PC-9 (cell line): ENCODE measurements at regions of chr2 and their contacts with region 1.

Region 1: GRCh38 chr2:113756355-113757137 is at the start of gene SLC35F5:
- DNase-seq: peak; percentile 74 to 93
- H3K4me3 ChIP-seq: peak within 1 kb of the TSS; percentile 89
- H3K27ac ChIP-seq: peak within 1 kb of the TSS; percentile 74
- H3K4me1 ChIP-seq: peaks cover 19% of the 10 kb centered on the region
- H3K27me3 ChIP-seq: no peaks in the 10 kb centered on the region
- CTCF ChIP-seq: no peak
- total RNA-seq, gene SLC35F5: 41.6 and 43.5 TPM in 2 replicates

Region 2: GRCh38 chr2:113799375-113799774 is 42.8 kb after region 1 on chr2:
- CTCF ChIA-PET with region 1: no interaction called
- POLR2A ChIA-PET with region 1: interaction called, 4 read pairs
- intact Hi-C with region 1: loop called (anchors 5 kb)
- DNase-seq: no peak
- H3K4me3 ChIP-seq: no peak overlapping the region
- H3K27ac ChIP-seq: no peak overlapping the region
- H3K4me1 ChIP-seq: no peaks in the 10 kb centered on the region
- H3K27me3 ChIP-seq: no peaks in the 10 kb centered on the region
- CTCF ChIP-seq: 0 out of 2 replicates have a peak, but pooled peaks have one; percentile 15

Region 3: GRCh38 chr2:113818382-113818951 is 61.9 kb after region 1 on chr2:
- CTCF ChIA-PET with region 1: no interaction called
- POLR2A ChIA-PET with region 1: no interaction called
- intact Hi-C with region 1: loop called (anchors 1 kb)
- DNase-seq: peak; percentile 76 to 88
- H3K4me3 ChIP-seq: peak overlapping the region; percentile 42; the same call in 1 of the 2 replicates
- H3K27ac ChIP-seq: peak overlapping the region; percentile 52
- H3K4me1 ChIP-seq: peaks cover 19% of the 10 kb centered on the region
- H3K27me3 ChIP-seq: no peaks in the 10 kb centered on the region
- CTCF ChIP-seq: no peak

Region 4: GRCh38 chr2:113831161-113831560 is 74.6 kb after region 1 on chr2:
- CTCF ChIA-PET with region 1: no interaction called
- POLR2A ChIA-PET with region 1: interaction called, 3 read pairs
- intact Hi-C with region 1: loop called (anchors 1 kb)
- DNase-seq: peak; percentile 71 to 93
- H3K4me3 ChIP-seq: no peak overlapping the region
- H3K27ac ChIP-seq: peak overlapping the region; percentile 80
- H3K4me1 ChIP-seq: peaks cover 10% of the 10 kb centered on the region
- H3K27me3 ChIP-seq: no peaks in the 10 kb centered on the region
- CTCF ChIP-seq: no peak

Region 5: DNA sequence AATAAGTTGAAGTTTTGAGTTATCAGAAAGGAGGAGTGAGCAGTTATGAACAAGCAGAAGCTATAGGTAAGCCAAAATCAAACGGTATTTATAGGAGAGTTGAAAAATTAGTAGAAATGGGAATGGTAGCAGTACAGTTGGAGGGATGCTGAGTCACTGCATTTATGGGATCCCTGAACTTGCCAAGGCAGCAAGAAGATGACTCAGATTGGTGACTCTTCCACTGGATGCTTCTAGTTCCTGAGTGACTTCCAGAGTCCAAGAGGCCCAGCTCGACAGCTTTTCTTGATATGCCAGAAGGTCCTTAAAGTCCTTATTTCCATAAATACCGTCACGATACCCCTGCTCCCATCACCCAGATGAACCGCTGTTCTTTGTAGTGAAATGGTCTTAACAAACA is 102.2 kb after region 1 on chr2:
- CTCF ChIA-PET with region 1: no interaction called
- POLR2A ChIA-PET with region 1: no interaction called
- intact Hi-C with region 1: no loop called
- DNase-seq: peak; percentile 16 to 72
- H3K4me3 ChIP-seq: no peak overlapping the region
- H3K27ac ChIP-seq: peak overlapping the region; percentile 61
- H3K4me1 ChIP-seq: peaks cover 11% of the 10 kb centered on the region
- H3K27me3 ChIP-seq: no peaks in the 10 kb centered on the region
- CTCF ChIP-seq: no peak

Region 6: GRCh38 chr2:113876503-113877387 is 120.2 kb after region 1 on chr2:
- CTCF ChIA-PET with region 1: no interaction called
- POLR2A ChIA-PET with region 1: interaction called, 11 read pairs
- intact Hi-C with region 1: loop called (anchors 1 kb)
- DNase-seq: peak; percentile 94 to 95
- H3K4me3 ChIP-seq: no peak overlapping the region
- H3K27ac ChIP-seq: no peak overlapping the region
- H3K4me1 ChIP-seq: peaks cover 34% of the 10 kb centered on the region
- H3K27me3 ChIP-seq: no peaks in the 10 kb centered on the region
- CTCF ChIP-seq: no peak

Region 7: DNA sequence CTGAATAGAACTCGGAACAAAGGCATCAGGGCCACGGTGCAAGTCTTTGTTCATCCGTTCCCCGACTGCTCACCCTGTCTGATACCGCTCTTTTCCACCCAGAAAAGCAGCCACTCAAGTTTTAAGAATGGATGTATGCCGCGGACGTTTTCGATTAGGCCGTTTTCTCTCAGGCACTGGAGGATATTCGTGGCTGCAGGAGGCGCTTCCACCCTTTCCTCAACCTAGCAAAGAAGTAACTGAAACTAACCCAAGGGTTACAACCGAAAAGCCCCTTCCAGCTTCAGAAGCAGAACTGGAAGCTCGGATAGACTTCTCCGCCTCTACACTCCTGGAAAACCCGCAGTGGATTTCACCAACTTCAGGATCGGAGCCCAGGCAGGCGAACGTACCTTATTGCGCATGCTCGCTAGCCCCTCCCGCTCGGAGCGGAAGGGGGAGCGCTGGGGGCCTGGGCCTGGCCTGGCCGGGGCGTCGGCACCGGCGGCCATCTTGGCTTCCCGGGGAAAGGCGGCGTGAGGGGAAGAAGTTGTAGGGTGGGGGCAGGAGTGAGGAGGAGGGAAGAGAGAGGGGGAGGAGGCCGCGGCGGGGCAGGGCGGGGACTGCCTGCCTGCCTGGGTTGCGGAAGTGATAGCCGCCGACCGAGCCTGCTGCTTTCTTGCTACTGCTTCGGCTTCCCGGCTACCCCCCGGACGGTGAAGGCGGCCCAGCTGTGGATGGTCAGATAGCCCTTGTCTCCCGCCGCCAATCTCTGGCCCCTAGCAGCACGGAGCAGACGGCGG is 133.1 kb after region 1 on chr2 and contains the start of gene ACTR3:
- CTCF ChIA-PET with region 1: no interaction called
- POLR2A ChIA-PET with region 1: no interaction called
- intact Hi-C with region 1: loop called (anchors 1 kb)
- DNase-seq: peak; percentile 94 to 98
- H3K4me3 ChIP-seq: peak within 1 kb of the TSS; percentile 88
- H3K27ac ChIP-seq: peak within 1 kb of the TSS; percentile 83
- H3K4me1 ChIP-seq: peaks cover 56% of the 10 kb centered on the region
- H3K27me3 ChIP-seq: no peaks in the 10 kb centered on the region
- CTCF ChIP-seq: no peak
- total RNA-seq, gene ACTR3: 220 and 222 TPM in 2 replicates

Region 8: GRCh38 chr2:113962692-113963480 is 206.3 kb after region 1 on chr2:
- CTCF ChIA-PET with region 1: no interaction called
- POLR2A ChIA-PET with region 1: interaction called, 6 read pairs
- intact Hi-C with region 1: loop called (anchors 5 kb)
- DNase-seq: peak in 1 of 2 experiments; percentile 74
- H3K4me3 ChIP-seq: no peak overlapping the region
- H3K27ac ChIP-seq: no peak overlapping the region
- H3K4me1 ChIP-seq: peaks cover 21% of the 10 kb centered on the region
- H3K27me3 ChIP-seq: no peaks in the 10 kb centered on the region
- CTCF ChIP-seq: no peak